ENCODE measurements at regions of chr3 and their contacts with region 1.

Region 1: DNA sequence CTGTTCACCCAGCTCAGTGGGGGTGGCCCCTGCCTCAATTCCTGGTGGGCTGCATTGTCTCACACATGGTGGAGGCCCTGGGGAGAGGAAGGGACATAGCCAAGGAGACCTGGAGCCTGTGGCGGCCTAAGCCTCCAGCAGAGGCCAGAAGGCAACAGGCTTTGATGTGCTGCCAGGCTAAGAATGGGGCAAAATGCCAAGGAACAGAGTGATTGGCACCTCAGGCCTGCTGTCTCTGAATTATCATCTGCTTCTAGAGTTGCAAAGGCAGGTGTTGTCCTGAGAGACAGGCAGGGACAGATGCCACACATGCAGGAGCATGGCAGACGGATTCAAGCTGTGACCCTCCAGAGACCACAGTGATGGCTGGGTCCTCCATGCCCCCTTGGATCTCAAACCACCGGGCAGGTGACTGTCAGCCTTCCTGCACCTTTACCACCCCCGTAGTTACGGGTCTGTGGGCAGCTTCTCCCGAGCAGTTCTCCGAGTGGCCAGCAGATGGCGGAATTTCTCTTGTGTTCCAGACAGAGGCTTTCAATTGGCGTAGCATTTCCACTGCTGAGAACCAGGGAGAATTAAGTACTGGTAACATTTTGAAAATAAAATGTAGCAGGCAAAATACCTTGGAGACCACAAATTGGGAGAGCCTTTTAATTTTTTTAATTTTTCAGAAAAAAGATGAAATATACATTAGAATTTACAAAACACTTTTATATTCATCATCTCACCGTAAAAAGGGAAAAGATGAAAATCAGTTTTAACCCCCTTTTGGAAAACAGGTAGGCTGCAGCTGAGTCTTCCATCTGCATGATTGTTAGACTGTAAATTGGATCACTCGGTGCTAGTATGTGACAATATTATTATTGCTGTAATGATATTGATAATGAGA is 525.5 kb upstream of the CFAP20DC start:
- DNase-seq: peak; percentile 87 to 97
- H3K4me3 ChIP-seq: no peak overlapping the region
- CTCF ChIP-seq: peak in 1 of 3 donors; percentile 83
- POLR2A ChIP-seq: no peak

Region 2: GRCh38 chr3:59531066-59531745 is 44.2 kb before region 1 on chr3:
- intact Hi-C with region 1: no loop called
- DNase-seq: no peak
- H3K4me3 ChIP-seq: no peak overlapping the region
- CTCF ChIP-seq: no peak
- POLR2A ChIP-seq: no peak

Region 3: GRCh38 chr3:59698091-59698490 is 122.7 kb after region 1 on chr3:
- intact Hi-C with region 1: no loop called
- DNase-seq: no peak
- H3K4me3 ChIP-seq: no peak overlapping the region
- CTCF ChIP-seq: no peak
- POLR2A ChIP-seq: no peak

Region 4: DNA sequence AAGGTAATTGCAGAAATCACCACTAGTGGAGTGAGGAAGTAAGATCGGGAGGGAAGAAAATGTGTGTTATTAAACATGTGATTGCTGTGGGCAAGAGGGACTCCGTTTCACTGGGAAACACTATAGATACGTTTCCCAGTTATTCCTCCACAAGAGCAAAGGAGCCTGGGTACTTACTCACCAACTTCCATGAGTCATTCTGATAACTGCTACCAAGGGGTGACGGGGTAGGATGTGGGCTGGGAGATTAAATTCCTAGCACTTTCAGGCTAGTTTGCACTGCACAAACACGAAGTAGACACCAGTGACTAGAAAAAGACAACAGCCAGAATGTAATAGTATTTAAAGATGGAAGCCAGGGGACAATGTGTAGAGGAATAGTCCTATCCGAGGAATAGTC is 287.3 kb after region 1 on chr3:
- intact Hi-C with region 1: loop called (anchors 10 kb)
- DNase-seq: no peak
- H3K4me3 ChIP-seq: no peak overlapping the region
- CTCF ChIP-seq: no peak
- POLR2A ChIP-seq: no peak

Region 5: DNA sequence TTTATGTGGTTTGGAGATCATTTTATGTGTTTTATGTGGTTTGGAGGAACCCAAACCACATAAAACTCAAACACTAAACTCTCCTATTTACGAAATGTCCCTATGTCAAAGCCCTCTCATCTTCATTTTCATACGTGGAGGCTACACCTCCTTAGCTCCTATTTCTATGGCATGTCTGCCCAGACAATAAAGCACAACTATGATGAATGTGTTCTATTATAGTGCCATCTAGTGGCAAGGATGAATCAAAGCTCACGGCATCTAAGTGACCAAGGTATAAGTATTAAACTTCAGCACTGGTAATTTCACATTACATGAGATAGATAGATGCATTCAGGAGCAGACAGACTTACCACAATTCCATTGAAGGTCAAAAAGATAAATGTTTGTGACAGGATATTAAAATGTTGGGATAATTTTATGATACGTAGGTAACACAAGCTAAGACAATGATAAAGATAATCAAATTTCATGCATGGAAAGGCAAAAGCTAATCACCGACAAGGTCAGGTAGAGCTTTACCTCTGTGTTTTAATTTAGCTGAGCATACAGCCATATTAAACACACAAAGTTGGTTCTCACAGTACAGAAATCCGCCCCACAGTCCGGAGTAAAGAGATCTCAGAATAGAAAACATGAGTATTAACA is 1806.5 kb after region 1 on chr3:
- intact Hi-C with region 1: loop called (anchors 10 kb)
- DNase-seq: no peak
- H3K4me3 ChIP-seq: no peak overlapping the region
- CTCF ChIP-seq: no peak
- POLR2A ChIP-seq: no peak